Caki2 (cell line): ENCODE measurements at regions of chr16 and their contacts with region 1.

Region 1: GRCh38 chr16:61128545-61129323 is 907.5 kb downstream of the CDH8 start:
- DNase-seq: no peak

Region 2: GRCh38 chr16:59848296-59848695 is 1280.4 kb before region 1 on chr16:
- in situ Hi-C with region 1: loop called (anchors 5 kb)
- DNase-seq: no peak

Region 3: GRCh38 chr16:61024180-61024900 is 104.4 kb before region 1 on chr16:
- in situ Hi-C with region 1: no loop called
- DNase-seq: no peak